H1 (cell line): ENCODE measurements at regions of chr4 and their contacts with region 1.

Region 1: DNA sequence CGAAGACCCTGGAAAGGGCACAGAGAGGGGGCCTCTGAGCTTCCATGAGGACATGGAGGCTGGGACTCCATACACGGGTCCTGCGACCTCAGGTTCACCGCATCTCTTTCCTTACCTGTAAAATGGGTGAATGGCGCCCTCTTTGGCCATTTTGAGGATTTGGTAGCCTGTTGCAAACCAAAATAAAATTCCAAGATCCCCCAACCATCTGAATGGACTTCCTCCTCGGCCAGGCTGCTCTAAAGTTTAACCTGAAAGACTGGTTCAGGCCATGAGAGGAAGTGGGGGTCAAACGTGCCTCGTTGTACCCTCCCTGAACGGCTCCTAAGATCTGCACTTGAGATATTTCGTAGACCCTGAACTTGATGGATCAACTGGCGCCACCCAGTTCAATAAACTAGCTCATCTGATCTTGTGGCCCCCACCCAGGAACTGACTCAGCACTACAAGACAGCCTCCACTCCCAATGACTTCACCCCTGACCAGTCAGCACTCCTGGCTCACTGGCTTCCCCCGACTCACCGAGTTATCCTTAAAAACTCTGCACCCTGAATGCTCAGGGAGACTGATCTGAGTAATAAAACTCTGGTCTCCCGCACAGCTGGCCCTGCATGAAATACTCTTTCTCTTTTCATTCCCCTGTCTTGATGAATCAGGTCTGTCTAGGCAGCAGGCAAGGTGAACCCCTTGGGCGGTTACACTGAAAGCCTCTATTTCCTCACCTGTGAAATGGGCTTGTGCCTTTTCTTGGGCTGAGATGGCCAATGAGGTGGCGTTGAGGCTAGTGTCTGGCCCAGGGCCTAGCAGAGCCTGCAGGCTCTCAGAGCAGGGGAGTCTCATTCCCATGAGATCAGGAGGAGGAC is 32.9 kb upstream of the GPR78 start:
- DNase-seq: peak; percentile 34 to 69
- H3K4me3 ChIP-seq: no peak overlapping the region
- H3K27ac ChIP-seq: no peak overlapping the region
- H3K4me1 ChIP-seq: peaks cover 0 to 15% (median 3%) of the 10 kb centered on the region in 4 experiments; a peak in 5 of 7 replicates
- H3K27me3 ChIP-seq: no peaks in the 10 kb centered on the region; a peak in 1 of 7 replicates
- CTCF ChIP-seq: peak in 2 of 3 experiments; percentile 82 to 84; a peak in 3 of 4 replicates
- EP300 ChIP-seq: peak in 1 of 2 experiments; percentile 25; a peak in 1 of 3 replicates
- POLR2A ChIP-seq: no peak
- RAD21 ChIP-seq: peak; percentile 91 to 95

Region 2: GRCh38 chr4:7649741-7650531 is 897.4 kb before region 1 on chr4:
- CTCF ChIA-PET with region 1: no interaction called
- POLR2A ChIA-PET with region 1: no interaction called
- DNase-seq: no peak
- H3K4me3 ChIP-seq: no peak overlapping the region
- H3K27ac ChIP-seq: no peak overlapping the region
- H3K4me1 ChIP-seq: peaks cover 0 to 14% (median 12%) of the 10 kb centered on the region in 4 experiments; a peak in 6 of 7 replicates
- H3K27me3 ChIP-seq: no peaks in the 10 kb centered on the region
- CTCF ChIP-seq: no peak
- EP300 ChIP-seq: no peak
- POLR2A ChIP-seq: no peak
- RAD21 ChIP-seq: no peak

Region 3: DNA sequence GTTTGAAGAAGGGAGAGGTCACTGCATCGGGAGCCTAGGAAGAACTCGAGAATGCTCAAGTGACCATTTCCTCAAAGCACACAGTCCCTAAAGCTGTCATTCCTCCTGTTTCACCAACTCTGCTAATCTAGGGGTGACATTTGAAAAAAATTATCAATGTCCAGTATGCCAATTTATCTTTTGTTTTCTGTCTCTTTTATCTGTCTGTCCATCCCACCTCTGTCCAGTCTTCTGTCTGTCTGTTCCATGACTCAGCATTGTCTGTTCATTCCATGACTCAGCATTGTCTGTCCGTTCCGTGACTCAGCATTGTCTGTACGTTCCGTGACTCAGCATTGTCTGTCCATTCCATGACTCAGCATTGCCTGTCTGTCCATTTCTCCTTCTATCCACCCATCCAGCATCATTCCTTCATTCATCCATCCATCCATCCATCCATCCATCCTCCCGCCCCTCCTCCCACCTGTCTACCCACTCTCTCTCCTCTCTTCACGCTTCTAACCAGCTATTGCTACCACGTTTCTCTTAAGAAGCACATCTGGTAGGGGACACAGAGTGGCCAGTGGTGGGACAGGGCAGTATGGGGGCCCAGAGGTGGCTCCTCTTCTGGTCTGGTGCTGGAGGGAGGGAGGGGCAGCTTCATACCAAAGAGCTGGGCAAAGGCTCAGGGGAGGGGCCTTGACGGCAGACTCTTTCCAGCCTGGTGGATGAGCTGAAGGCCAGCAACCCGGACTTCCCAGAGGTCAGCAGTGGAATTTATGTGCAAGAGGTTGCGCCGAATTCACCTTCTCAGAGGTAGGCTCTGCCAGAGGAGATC is 243.6 kb before region 1 on chr4:
- CTCF ChIA-PET with region 1: no interaction called
- POLR2A ChIA-PET with region 1: no interaction called
- DNase-seq: peak in 1 of 2 experiments; percentile 32
- H3K4me3 ChIP-seq: no peak overlapping the region
- H3K27ac ChIP-seq: no peak overlapping the region; the same call in 1 of the 2 replicates
- H3K4me1 ChIP-seq: peaks cover 0 to 9% (median 6%) of the 10 kb centered on the region in 4 experiments; a peak in 4 of 7 replicates
- H3K27me3 ChIP-seq: peaks cover 0 to 4% (median 0%) of the 10 kb centered on the region in 4 experiments; a peak in 2 of 7 replicates
- CTCF ChIP-seq: no peak
- EP300 ChIP-seq: no peak
- POLR2A ChIP-seq: no peak
- RAD21 ChIP-seq: no peak

Region 4: DNA sequence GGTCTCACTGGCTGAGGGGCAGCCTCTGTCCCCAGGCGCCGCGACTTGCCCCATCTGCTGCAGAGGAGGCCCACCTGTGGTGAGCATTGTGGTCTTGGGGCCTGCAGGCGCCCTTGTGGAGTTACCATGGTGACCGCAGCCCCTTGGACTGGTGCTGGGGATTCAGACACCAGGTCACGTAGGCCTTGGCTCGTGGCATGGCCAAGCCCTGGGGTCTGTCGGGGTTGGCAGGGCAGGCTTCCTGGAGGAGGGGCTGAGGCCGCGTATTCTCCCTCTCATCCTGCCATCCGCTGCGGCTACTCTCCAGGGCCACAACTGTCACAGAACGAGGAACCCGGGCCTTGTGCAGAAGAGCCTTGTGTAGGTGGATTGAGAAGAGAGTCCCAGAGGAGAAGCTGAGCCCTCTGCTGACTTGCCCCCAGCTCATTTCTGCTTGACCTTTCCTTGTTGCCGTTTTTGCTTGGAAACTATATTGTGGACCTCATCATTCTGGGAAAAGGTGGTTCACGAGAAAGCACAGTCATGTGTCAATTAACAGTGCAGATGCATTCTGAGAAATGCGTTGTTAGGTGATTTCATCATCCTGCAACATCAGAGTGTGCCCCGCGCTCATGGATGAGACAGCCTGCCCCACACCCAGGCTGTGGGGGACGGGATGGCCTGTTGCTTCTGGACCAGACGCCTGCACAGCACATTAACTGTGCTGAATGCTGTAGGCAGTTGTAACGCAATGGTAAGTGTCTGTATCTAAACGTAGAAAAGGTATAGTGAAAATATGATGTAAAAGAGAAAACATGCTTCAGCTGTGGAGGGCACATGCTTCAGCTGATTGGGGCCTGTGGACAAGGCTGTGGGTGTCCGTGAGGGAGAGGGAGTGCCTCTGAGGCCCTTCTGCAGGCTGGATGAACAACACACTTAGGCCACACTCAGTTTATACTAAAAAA is 68.3 kb before region 1 on chr4:
- CTCF ChIA-PET with region 1: interaction called, 237 read pairs
- POLR2A ChIA-PET with region 1: no interaction called
- DNase-seq: no peak
- H3K4me3 ChIP-seq: no peak overlapping the region
- H3K27ac ChIP-seq: no peak overlapping the region
- H3K4me1 ChIP-seq: peaks cover 0 to 3% (median 0%) of the 10 kb centered on the region in 4 experiments; a peak in 2 of 7 replicates
- H3K27me3 ChIP-seq: no peaks in the 10 kb centered on the region
- CTCF ChIP-seq: no peak
- EP300 ChIP-seq: no peak
- POLR2A ChIP-seq: no peak
- RAD21 ChIP-seq: no peak

Region 5: GRCh38 chr4:8504279-8505007 is 42.9 kb before region 1 on chr4:
- CTCF ChIA-PET with region 1: interaction called, 11 read pairs
- POLR2A ChIA-PET with region 1: no interaction called
- DNase-seq: no peak
- H3K4me3 ChIP-seq: no peak overlapping the region
- H3K27ac ChIP-seq: no peak overlapping the region
- H3K4me1 ChIP-seq: peaks cover 6 to 24% (median 14%) of the 10 kb centered on the region in 4 experiments
- H3K27me3 ChIP-seq: no peaks in the 10 kb centered on the region; a peak in 1 of 7 replicates
- CTCF ChIP-seq: no peak
- EP300 ChIP-seq: no peak
- POLR2A ChIP-seq: no peak
- RAD21 ChIP-seq: no peak

Region 6: GRCh38 chr4:8537041-8537552 is 10.2 kb before region 1 on chr4:
- CTCF ChIA-PET with region 1: interaction called, 23 read pairs
- POLR2A ChIA-PET with region 1: interaction called, 4 read pairs
- DNase-seq: no peak
- H3K4me3 ChIP-seq: no peak overlapping the region
- H3K27ac ChIP-seq: no peak overlapping the region
- H3K4me1 ChIP-seq: peaks cover 4 to 17% (median 14%) of the 10 kb centered on the region in 4 experiments
- H3K27me3 ChIP-seq: no peaks in the 10 kb centered on the region; a peak in 1 of 7 replicates
- CTCF ChIP-seq: no peak
- EP300 ChIP-seq: no peak
- POLR2A ChIP-seq: no peak
- RAD21 ChIP-seq: no peak

Region 7: GRCh38 chr4:8568068-8568680 is 20.8 kb after region 1 on chr4:
- CTCF ChIA-PET with region 1: interaction called, 21 read pairs
- POLR2A ChIA-PET with region 1: interaction called, 5 read pairs
- DNase-seq: peak in 1 of 2 experiments; percentile 63
- H3K4me3 ChIP-seq: peak overlapping the region in 1 of 4 experiments; percentile 35; a peak in 1 of 8 replicates
- H3K27ac ChIP-seq: peak overlapping the region; percentile 77; the same call in 1 of the 2 replicates
- H3K4me1 ChIP-seq: peaks cover 1 to 17% (median 8%) of the 10 kb centered on the region in 4 experiments; a peak in 5 of 7 replicates
- H3K27me3 ChIP-seq: no peaks in the 10 kb centered on the region
- CTCF ChIP-seq: no peak
- EP300 ChIP-seq: 0 out of 3 replicates have a peak, but pooled peaks of 1 of the 2 experiments have one; percentile 27
- POLR2A ChIP-seq: peak in 1 of 2 experiments; percentile 56; a peak in 2 of 3 replicates
- RAD21 ChIP-seq: no peak

Region 8: GRCh38 chr4:8594097-8595038 is 47.0 kb after region 1 on chr4:
- CTCF ChIA-PET with region 1: interaction called, 49 read pairs
- POLR2A ChIA-PET with region 1: interaction called, 3 read pairs
- DNase-seq: peak in 1 of 2 experiments; percentile 77
- H3K4me3 ChIP-seq: peak overlapping the region in 1 of 4 experiments; percentile 78; a peak in 2 of 8 replicates
- H3K27ac ChIP-seq: no peak overlapping the region
- H3K4me1 ChIP-seq: peaks cover 0 to 24% (median 20%) of the 10 kb centered on the region in 4 experiments; a peak in 6 of 7 replicates
- H3K27me3 ChIP-seq: 0 out of 7 replicates have a peak, but pooled peaks cover 0 to 3% (median under 1%) of the 10 kb centered on the region in 4 experiments
- CTCF ChIP-seq: peak in 2 of 3 experiments; percentile 79 to 84; a peak in 3 of 4 replicates
- EP300 ChIP-seq: no peak
- POLR2A ChIP-seq: no peak
- RAD21 ChIP-seq: peak; percentile 90 to 95